Endothelial cell of umbilical vein (primary cell): ENCODE measurements at regions of chr3 and their contacts with region 1.

Region 1: DNA sequence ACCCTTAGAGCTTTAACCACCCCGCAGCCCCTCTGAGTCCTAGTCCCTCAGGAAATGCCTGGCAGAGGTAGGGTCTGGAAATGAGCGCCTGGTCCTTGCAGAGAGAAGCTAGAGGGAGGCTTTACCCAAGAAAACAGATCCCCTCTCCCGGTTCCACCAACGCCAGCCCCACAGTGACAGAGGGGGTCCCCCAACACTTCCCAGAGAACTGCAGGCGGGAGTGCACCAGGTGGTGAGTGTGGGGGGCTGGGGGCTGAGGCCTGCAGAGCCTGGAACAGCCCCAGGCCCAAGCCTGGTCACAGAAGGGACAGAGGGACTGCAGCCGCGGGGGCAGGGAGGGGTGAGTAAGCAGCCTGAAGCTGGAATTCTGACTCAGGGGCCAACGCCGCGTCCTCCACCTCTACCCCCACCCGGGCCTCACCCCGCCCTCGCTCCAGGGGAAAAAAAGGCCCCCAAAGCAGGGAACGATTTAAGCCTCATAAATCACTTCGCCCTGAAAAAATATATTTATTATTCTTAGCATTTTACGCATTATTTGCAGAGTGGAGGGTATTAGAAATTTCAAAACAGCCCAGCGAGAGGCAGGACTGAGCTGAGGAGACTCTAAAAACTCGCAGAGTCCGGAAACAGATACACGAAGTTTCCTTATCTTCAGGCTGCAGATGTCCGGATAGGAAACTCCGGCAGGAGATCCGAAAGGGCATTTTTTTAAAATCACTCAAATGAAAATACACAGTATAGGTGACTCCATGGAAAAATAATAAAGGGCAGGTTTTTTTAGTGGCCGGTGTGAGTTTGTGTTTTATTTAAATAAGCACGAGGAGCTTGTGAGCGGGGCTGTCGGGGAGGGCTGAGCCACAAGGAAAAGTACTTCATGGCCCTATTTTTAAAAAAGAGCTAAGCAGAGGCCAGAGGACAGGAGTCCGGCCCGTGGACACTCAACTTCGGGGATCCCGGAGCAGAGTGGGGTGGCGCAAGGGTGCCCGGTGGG is 10.0 kb downstream of the GATA2 start:
- DNase-seq: peak; percentile 99
- H3K4me3 ChIP-seq: peak overlapping the region in 2 of 3 experiments; percentile 77 to 95
- H3K27ac ChIP-seq: peak overlapping the region; percentile 97
- H3K4me1 ChIP-seq: peaks cover 52% of the 10 kb centered on the region
- H3K27me3 ChIP-seq: no peaks in the 10 kb centered on the region
- CTCF ChIP-seq: peak in 1 of 2 donors; percentile 8
- POLR2A ChIP-seq: peak; percentile 89

Region 2: GRCh38 chr3:128123538-128124368 is 359.2 kb before region 1 on chr3 and contains the start of gene RUVBL1:
- CTCF ChIA-PET with region 1: no interaction called
- POLR2A ChIA-PET with region 1: no interaction called
- dilution Hi-C with region 1: no loop called
- intact Hi-C with region 1: loop called (anchors 1 kb)
- DNase-seq: peak; percentile 98
- H3K4me3 ChIP-seq: peak within 1 kb of the TSS; percentile 59 to 85 (median 78)
- H3K27ac ChIP-seq: peak within 1 kb of the TSS; percentile 65
- H3K4me1 ChIP-seq: peaks cover 12% of the 10 kb centered on the region
- H3K27me3 ChIP-seq: peaks cover 0 to 2% of the 10 kb centered on the region in 2 experiments
- CTCF ChIP-seq: no peak
- POLR2A ChIP-seq: peak; percentile 67
- total RNA-seq, gene RUVBL1: 57.0 and 58.5 TPM in 2 replicates

Region 3: DNA sequence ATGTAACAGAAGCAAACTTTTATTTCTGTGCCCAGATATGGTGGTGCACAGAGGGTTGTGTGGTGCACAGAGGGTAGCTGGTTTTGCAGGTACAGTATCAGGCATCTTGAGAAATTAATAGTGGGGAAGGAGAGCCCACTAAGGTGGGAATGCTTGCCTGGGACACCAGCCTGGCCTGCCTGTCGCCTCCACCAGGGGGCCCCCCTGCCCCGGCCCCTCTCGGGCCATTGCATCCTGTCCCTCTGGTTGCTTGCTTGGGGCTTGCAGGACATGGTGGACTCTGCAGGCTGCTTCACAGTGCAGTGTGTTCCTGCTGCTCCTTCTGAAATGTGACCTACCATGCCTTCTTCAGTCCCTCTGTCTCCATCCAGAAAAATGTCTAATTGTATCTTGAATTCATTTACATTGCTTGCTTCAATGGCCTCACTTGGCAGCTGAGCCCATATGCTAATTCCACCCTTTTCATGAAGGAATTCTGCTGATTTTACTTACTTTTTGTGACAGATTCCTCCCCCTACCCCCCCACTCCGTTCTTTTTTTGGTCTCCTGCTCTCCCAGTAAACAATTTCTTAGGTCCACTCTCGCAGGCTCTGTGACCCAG is 256.1 kb before region 1 on chr3:
- CTCF ChIA-PET with region 1: interaction called, 9 read pairs
- POLR2A ChIA-PET with region 1: no interaction called
- dilution Hi-C with region 1: no loop called
- intact Hi-C with region 1: loop called (anchors 5 kb)
- DNase-seq: peak; percentile 59
- H3K4me3 ChIP-seq: no peak overlapping the region
- H3K27ac ChIP-seq: no peak overlapping the region
- H3K4me1 ChIP-seq: no peaks in the 10 kb centered on the region
- H3K27me3 ChIP-seq: no peaks in the 10 kb centered on the region
- CTCF ChIP-seq: peak; percentile 89 to 98
- POLR2A ChIP-seq: no peak

Region 4: GRCh38 chr3:128408693-128409623 is 74.0 kb before region 1 on chr3:
- CTCF ChIA-PET with region 1: no interaction called
- POLR2A ChIA-PET with region 1: no interaction called
- dilution Hi-C with region 1: no loop called
- intact Hi-C with region 1: no loop called
- DNase-seq: no peak
- H3K4me3 ChIP-seq: no peak overlapping the region
- H3K27ac ChIP-seq: no peak overlapping the region
- H3K4me1 ChIP-seq: no peaks in the 10 kb centered on the region
- H3K27me3 ChIP-seq: no peaks in the 10 kb centered on the region
- CTCF ChIP-seq: peak in 1 of 2 donors; percentile 30
- POLR2A ChIP-seq: no peak

Region 5: GRCh38 chr3:128432300-128432970 is 50.5 kb before region 1 on chr3:
- CTCF ChIA-PET with region 1: interaction called, 48 read pairs
- POLR2A ChIA-PET with region 1: no interaction called
- dilution Hi-C with region 1: no loop called
- intact Hi-C with region 1: no loop called
- DNase-seq: no peak
- H3K4me3 ChIP-seq: peak overlapping the region in 1 of 3 experiments; percentile 11
- H3K27ac ChIP-seq: no peak overlapping the region
- H3K4me1 ChIP-seq: no peaks in the 10 kb centered on the region
- H3K27me3 ChIP-seq: peaks cover 29 to 34% of the 10 kb centered on the region in 2 experiments
- CTCF ChIP-seq: no peak
- POLR2A ChIP-seq: no peak

Region 6: DNA sequence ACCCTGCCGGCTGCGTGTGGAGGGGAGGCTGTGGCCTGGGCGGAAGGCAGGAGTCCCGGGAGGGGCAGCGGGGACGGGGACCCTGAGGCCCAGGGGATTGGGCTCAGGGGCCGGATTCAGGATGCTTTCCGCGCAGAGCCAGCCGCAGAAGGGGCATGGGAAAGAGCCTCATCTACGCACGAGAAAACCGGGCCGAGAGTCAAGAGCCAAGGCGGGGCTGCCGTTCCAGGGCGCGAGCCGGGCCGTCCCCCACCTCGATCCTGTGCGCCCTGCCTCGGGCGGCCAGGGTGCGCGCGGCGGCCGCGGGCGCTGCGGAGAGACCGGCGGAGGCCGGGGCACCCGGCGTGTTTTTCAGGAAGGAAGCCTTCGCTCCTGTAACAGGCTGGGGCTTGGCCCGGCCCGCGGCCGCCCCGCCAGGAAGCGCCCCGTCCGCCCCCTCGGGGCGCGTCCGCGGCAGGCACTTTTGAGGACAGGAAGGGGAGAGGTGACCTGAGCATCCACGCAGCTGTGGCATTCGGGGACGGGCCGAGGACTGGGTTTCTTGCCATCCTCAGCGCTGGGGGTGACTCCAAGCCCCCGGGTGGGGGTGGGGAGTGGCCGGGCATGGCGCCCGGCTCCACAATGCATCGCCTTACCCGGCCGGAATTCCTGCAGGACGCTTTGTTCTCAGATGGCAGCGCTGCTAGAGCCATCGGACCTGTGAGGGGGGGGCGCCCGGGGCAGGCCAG is 72.3 kb after region 1 on chr3:
- CTCF ChIA-PET with region 1: interaction called, 18 read pairs
- POLR2A ChIA-PET with region 1: no interaction called
- dilution Hi-C with region 1: no loop called
- intact Hi-C with region 1: loop called (anchors 1 kb)
- DNase-seq: peak; percentile 86
- H3K4me3 ChIP-seq: no peak overlapping the region
- H3K27ac ChIP-seq: peak overlapping the region; percentile 75
- H3K4me1 ChIP-seq: peaks cover 40% of the 10 kb centered on the region
- H3K27me3 ChIP-seq: no peaks in the 10 kb centered on the region
- CTCF ChIP-seq: no peak
- POLR2A ChIP-seq: peak; percentile 35